ENCODE measurements at regions of chr12 and their contacts with region 1.

Region 1: GRCh38 chr12:57476162-57476992 is 3.3 kb downstream of the ARHGAP9 start:
- DNase-seq: peak; percentile 96
- ATAC-seq: peak; percentile 71
- H3K4me3 Mint-ChIP-seq: peak overlapping the region; percentile 86
- H3K27ac Mint-ChIP-seq: peak overlapping the region; percentile 99
- H3K4me1 Mint-ChIP-seq: peaks cover 62% of the 10 kb centered on the region
- H3K27me3 Mint-ChIP-seq: no peaks in the 10 kb centered on the region

Region 2: DNA sequence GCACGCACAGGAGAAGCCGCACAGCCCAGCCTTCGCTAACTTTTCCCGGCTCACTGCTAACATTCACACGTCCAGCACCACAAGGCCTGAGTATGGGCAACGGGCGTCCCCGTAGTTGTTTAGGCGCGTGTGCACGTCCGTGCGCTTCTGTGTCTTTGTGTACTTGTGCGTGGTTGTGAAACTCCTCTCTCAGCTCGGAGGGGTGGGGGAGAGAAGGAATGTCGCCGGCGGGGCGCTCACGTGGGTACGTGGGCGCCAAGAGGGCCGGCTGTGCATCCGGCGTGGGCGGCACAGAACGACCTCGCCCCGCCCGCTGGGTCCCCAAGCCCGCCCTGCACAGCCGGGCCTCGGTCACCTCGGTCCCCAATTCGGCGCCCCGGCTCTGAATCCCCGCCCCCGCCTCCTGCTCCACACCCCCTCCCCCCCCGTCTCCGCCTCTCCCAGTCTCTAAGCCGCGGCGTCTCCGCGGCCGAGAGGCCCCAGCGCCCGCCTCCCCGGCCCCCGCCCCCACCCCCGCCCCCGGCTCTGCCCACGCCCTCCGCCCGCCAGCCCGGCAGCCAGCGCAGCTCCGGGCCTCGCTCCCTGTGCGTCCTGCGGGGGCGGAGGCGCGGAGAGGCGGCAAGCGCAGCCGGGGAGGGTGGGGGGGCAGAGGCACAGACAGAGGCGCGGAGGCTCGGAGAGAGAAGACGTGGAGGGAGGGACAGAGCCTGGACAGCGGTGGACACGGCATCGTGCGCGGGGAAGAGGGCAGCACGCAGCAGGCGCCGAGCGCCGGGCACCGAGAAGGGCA is 387.7 kb before region 1 on chr12 and contains the start of gene NAB2:
- CTCF ChIA-PET with region 1: interaction called, 3 read pairs
- POLR2A ChIA-PET with region 1: no interaction called
- intact Hi-C with region 1: loop called in 1 of 2 experiments (anchors 5 kb)
- DNase-seq: peak; percentile 95
- ATAC-seq: peak; percentile 49
- H3K4me3 Mint-ChIP-seq: peak within 1 kb of the TSS; percentile 93
- H3K27ac Mint-ChIP-seq: peak within 1 kb of the TSS; percentile 95
- H3K4me1 Mint-ChIP-seq: peaks cover 63% of the 10 kb centered on the region
- H3K27me3 Mint-ChIP-seq: no peaks in the 10 kb centered on the region
- total RNA-seq, gene NAB2: 46.8 to 48.6 TPM

Region 3: GRCh38 chr12:57182921-57183790 is 293.2 kb before region 1 on chr12:
- CTCF ChIA-PET with region 1: no interaction called
- POLR2A ChIA-PET with region 1: no interaction called
- intact Hi-C with region 1: no loop called
- DNase-seq: peak; percentile 89
- ATAC-seq: peak; percentile 99
- H3K4me3 Mint-ChIP-seq: no peak overlapping the region
- H3K27ac Mint-ChIP-seq: no peak overlapping the region
- H3K4me1 Mint-ChIP-seq: peaks cover 2% of the 10 kb centered on the region
- H3K27me3 Mint-ChIP-seq: no peaks in the 10 kb centered on the region

Region 4: GRCh38 chr12:57430931-57431720 is 45.3 kb before region 1 on chr12 and contains the start of gene R3HDM2:
- CTCF ChIA-PET with region 1: interaction called, 6 read pairs
- POLR2A ChIA-PET with region 1: no interaction called
- intact Hi-C with region 1: loop called in 1 of 2 experiments (anchors 1 kb)
- DNase-seq: peak; percentile 97
- ATAC-seq: peak; percentile 95
- H3K4me3 Mint-ChIP-seq: peak within 1 kb of the TSS; percentile 89
- H3K27ac Mint-ChIP-seq: peak within 1 kb of the TSS; percentile 100
- H3K4me1 Mint-ChIP-seq: peaks cover 35% of the 10 kb centered on the region
- H3K27me3 Mint-ChIP-seq: no peaks in the 10 kb centered on the region
- total RNA-seq, gene R3HDM2: 45.9 to 52.5 TPM

Region 5: GRCh38 chr12:57487597-57488401 is 11.4 kb after region 1 on chr12 and contains the start of gene MARS1:
- CTCF ChIA-PET with region 1: interaction called, 25 read pairs
- POLR2A ChIA-PET with region 1: no interaction called
- intact Hi-C with region 1: loop called (anchors 1 kb)
- DNase-seq: peak; percentile 96
- ATAC-seq: peak; percentile 98
- H3K4me3 Mint-ChIP-seq: peak within 1 kb of the TSS; percentile 100
- H3K27ac Mint-ChIP-seq: peak within 1 kb of the TSS; percentile 94
- H3K4me1 Mint-ChIP-seq: peaks cover 35% of the 10 kb centered on the region
- H3K27me3 Mint-ChIP-seq: no peaks in the 10 kb centered on the region
- total RNA-seq, gene MARS1: 389 to 583 TPM

Region 6: DNA sequence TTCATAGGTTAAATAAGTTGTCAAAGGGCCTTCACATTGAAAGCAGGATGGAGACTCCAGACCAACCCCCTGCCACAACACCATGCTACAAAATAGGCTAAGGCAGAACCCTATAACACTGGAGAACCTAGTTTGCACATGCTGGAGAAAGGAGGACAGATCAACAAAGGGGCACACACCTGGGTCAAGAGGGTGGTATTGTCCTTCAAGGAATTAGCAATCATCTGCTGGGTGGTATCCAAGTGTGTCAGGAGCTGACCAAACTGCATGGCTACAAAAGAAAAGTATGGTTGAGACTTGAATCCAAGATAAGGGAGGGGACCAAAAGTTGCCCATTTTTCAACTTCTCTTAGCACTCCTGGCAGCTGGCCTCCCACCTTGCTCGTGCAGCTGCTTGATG is 55.5 kb after region 1 on chr12:
- CTCF ChIA-PET with region 1: interaction called, 3 read pairs
- POLR2A ChIA-PET with region 1: interaction called, 13 read pairs
- intact Hi-C with region 1: no loop called
- DNase-seq: no peak
- ATAC-seq: no peak
- H3K4me3 Mint-ChIP-seq: no peak overlapping the region
- H3K27ac Mint-ChIP-seq: peak overlapping the region; percentile 19
- H3K4me1 Mint-ChIP-seq: no peaks in the 10 kb centered on the region
- H3K27me3 Mint-ChIP-seq: no peaks in the 10 kb centered on the region

Region 7: DNA sequence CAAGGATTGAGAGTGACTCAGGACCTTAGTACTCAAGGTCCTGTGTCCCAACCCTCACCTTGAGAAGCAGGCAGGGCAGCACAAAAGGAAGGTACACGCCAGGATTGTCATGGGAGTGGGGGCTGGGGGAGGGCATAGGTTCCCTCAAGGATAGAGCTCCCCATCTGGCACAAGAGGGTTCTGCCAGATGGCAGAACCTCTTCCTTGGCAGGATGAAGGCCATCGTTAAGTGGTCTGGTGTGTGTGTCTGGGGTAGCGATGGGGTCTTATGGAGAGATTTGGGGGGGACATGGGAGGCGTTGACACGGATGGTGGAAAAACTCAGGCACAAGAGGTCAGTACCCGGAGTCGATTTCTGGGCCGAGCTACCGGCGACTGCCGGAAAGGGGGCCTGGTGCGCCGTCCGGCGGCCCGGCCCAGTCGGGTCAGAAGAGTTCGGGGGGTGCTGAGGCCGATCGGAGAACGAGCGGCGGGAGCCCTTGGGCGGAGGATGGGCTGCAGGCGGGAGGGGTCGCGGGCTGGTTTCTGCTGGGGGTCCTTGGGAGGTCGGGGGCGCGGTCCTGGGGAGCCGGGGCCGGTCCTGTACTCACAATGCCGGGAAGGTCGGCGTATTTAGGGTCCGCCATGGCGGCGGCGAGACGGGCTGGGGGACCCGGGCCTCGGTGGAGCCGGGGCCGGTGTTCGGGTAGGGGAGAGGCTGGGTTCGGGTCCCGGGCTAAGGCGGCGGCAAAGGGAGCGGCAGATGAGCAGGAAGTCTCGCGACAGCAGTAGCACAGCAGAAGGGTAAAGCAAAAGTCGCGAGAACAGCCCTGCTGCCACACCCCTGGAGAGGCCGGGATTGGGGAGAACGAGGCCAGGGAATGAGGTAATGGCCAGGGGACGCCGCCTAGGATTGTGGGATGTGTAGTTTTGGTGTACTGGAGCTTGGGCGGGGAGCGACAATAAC is 70.3 kb after region 1 on chr12 and contains the start of gene DCTN2:
- CTCF ChIA-PET with region 1: interaction called, 3 read pairs
- POLR2A ChIA-PET with region 1: no interaction called
- intact Hi-C with region 1: loop called in 1 of 2 experiments (anchors 1 kb)
- DNase-seq: peak; percentile 97
- ATAC-seq: peak; percentile 98
- H3K4me3 Mint-ChIP-seq: peak within 1 kb of the TSS; percentile 99
- H3K27ac Mint-ChIP-seq: peak within 1 kb of the TSS; percentile 99
- H3K4me1 Mint-ChIP-seq: peaks cover 45% of the 10 kb centered on the region
- H3K27me3 Mint-ChIP-seq: peaks cover 13% of the 10 kb centered on the region
- total RNA-seq, gene DCTN2: 69.7 to 81.2 TPM

Region 8: DNA sequence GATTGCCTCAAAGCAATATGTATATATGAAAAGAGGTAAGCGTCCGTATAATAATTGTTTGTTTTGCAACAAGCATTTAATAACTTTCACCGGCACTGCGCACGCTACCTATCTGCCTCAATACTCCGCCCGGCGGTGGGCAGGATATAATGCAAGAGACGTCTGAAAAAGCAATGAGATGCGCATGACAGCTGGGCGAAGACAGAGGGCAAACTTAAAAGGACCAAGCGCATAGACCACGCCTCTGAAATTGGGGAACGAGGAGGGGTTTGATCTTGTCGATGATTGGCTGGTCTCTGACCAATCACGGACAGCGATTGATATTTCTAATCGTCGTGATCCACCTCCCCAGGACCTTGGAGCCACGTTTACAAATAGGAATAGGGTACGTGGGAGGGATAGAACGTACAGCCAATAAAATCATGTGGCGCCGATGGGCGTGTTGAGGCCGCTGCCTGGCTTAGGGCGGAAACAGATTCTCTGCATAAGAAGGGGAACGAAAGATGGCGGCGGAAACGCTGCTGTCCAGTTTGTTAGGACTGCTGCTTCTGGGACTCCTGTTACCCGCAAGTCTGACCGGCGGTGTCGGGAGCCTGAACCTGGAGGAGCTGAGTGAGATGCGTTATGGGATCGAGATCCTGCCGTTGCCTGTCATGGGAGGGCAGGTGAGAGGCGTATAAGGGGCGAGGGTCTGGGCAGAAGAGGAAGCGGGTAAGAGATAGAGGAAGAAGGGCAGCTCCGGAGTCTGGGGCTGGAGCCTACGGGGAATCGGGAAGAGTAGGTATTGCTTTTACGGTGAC is 217.5 kb after region 1 on chr12 and contains the start of gene OS9:
- CTCF ChIA-PET with region 1: no interaction called
- POLR2A ChIA-PET with region 1: no interaction called
- intact Hi-C with region 1: loop called in 1 of 2 experiments (anchors 5 kb)
- DNase-seq: peak; percentile 96
- ATAC-seq: peak; percentile 98
- H3K4me3 Mint-ChIP-seq: no peak within 1 kb of the TSS
- H3K27ac Mint-ChIP-seq: no peak within 1 kb of the TSS
- H3K4me1 Mint-ChIP-seq: peaks cover 4% of the 10 kb centered on the region
- H3K27me3 Mint-ChIP-seq: peaks cover 8% of the 10 kb centered on the region
- total RNA-seq, gene OS9: 61.7 to 63.2 TPM

Region 9: GRCh38 chr12:58893495-58893894 is 1417.1 kb after region 1 on chr12:
- CTCF ChIA-PET with region 1: no interaction called
- POLR2A ChIA-PET with region 1: no interaction called
- intact Hi-C with region 1: no loop called
- DNase-seq: no peak
- ATAC-seq: no peak
- H3K4me3 Mint-ChIP-seq: no peak overlapping the region
- H3K27ac Mint-ChIP-seq: no peak overlapping the region
- H3K4me1 Mint-ChIP-seq: no peaks in the 10 kb centered on the region
- H3K27me3 Mint-ChIP-seq: no peaks in the 10 kb centered on the region

Measured in activated CD4-positive, alpha-beta T cell treated with anti-CD3 and anti-CD28 coated beads for 36 hours (primary cell).